ENCODE measurements at regions of chr9 and their contacts with region 1.

Region 1: DNA sequence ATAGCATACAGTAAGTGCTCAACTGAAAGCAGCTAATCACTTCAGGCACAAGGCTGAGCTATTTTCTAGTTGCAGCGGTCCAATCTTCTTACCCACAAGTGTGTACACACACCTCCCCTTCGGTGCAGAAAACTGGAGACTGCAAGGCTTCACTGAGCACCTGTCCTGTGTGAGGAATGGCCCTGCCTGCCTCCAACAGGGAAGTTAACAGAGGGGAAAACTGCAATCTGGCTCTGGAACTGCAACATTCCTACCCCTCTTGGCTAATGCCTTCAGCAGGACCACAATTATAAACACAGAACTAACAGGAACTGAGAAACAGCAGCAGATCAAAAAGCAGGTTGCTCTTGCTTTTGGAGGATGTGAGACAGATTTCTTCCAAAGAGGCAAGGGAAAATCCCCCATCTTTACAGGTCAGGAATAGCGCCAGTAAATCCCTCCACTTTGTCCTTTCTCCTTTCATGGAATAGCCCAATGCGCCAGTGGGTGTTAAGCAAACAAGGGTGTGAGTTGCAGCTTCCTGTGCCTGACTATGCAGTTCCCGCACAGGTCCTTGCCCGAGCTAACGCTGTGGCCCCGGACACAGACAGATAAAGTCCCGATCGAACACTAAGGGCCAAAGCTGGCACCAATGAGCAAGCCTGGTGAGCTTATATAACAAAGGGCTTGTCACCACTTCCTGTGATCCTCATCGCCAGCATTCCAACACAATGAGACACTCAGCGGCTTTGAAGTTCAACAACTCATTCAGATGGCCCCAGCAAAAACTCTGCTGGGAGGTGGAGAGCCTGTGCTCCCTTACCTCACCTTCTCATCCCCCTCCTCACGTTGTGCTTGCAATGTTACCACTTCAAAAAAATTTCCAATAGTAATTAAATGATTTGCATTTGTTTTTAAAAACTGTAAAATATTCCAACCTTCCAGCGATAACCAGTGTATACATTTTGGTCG is 21.5 kb downstream of the SHB start:
- DNase-seq: peak; percentile 79 to 90
- H3K4me3 ChIP-seq: peak overlapping the region; percentile 17
- H3K4me3 Mint-ChIP-seq: peak overlapping the region; percentile 79
- H3K27ac Mint-ChIP-seq: peak overlapping the region; percentile 100
- H3K4me1 ChIP-seq: peaks cover 62% of the 10 kb centered on the region
- H3K4me1 Mint-ChIP-seq: peaks cover 51% of the 10 kb centered on the region
- H3K27me3 ChIP-seq: no peaks in the 10 kb centered on the region
- H3K27me3 Mint-ChIP-seq: no peaks in the 10 kb centered on the region
- CTCF ChIP-seq: no peak

Region 2: DNA sequence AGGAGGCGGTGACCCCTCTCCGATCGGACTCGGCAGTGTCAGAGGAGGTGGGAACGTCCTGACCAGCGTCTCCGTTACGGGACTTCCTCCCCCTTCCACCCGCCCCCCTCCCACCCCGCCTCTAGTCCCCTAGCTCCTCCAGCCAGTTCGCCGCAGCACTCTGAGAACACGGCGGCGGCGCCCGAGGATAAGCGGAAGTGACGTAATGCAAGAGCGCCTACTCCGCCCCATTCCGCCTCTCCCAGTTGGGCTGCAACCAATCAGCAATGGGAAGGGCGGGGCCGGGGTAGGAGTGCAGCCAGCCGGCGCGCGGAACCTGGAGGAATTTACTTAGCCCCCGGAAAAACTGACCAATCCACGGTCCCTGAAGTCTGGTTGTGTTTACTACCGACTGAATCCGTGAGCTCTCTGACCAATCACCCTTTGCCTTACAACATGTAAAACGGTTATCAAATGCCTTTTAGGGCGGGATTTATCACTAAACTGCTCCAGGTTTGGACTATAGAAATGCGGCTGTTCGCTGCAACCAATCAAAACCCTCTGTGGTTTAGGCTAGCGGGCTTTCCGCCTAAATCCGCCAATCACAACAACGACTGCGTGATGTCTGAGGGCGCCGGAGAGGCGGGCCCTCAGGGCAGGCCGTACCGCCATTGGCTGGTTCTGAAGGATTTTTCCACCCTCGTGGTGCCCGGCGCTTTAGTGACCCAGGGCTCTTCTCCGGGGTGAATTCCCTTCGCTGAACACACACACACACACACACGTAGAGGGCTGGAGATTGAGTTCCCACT is 582.1 kb before region 1 on chr9 and contains the start of gene ZBTB5:
- CTCF ChIA-PET with region 1: no interaction called
- POLR2A ChIA-PET with region 1: no interaction called
- intact Hi-C with region 1: loop called (anchors 5 kb)
- DNase-seq: peak; percentile 99
- H3K4me3 ChIP-seq: peak within 1 kb of the TSS; percentile 89
- H3K4me3 Mint-ChIP-seq: peak within 1 kb of the TSS; percentile 95
- H3K27ac Mint-ChIP-seq: peak within 1 kb of the TSS; percentile 96
- H3K4me1 ChIP-seq: peaks cover 12% of the 10 kb centered on the region
- H3K4me1 Mint-ChIP-seq: peaks cover 21% of the 10 kb centered on the region
- H3K27me3 ChIP-seq: no peaks in the 10 kb centered on the region
- H3K27me3 Mint-ChIP-seq: no peaks in the 10 kb centered on the region
- CTCF ChIP-seq: no peak
- total RNA-seq, gene ZBTB5: 12.5 and 13.2 TPM in 2 replicates

Region 3: DNA sequence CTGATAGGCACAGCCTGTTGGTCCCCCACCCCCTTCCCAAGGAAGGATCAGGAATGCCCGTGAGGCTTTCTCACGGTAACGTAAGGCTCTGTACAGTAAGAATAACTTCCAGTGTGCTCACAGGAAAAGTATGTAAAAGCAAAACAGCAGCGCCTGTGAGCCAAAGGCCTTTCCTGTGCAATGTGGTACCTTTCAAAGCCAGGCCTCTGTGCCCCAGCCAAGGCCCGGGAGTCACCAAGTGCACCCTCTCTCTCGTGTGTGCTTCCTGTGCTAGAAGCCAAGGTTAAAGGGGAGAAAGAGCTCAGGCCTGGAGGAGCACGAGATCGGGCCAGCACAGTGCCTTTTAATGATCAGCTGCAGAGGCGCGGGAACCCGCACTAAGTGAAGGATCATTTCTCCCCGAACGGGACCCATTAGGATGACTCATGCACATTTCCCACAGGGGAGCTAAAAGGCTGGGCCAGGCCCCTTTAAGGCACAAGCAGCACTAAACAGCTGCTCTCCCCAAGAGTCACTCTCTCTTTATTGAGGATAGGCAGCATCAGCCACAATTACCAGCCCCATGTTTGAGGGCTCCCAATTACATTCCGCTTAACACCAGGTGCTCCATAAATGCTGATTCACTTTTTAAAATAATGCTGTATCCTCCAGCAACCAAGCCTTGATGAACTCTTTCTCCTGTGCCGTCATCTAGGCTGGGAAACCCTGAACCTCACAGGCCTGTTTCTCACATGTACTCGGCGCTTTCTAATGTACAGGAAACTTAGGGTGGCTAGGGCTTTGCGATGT is 21.4 kb before region 1 on chr9:
- CTCF ChIA-PET with region 1: interaction called, 5 read pairs
- POLR2A ChIA-PET with region 1: interaction called, 18 read pairs
- intact Hi-C with region 1: loop called (anchors 1 kb)
- DNase-seq: no peak
- H3K4me3 ChIP-seq: no peak overlapping the region
- H3K4me3 Mint-ChIP-seq: no peak overlapping the region
- H3K27ac Mint-ChIP-seq: peak overlapping the region; percentile 94
- H3K4me1 ChIP-seq: peaks cover 51% of the 10 kb centered on the region
- H3K4me1 Mint-ChIP-seq: peaks cover 35% of the 10 kb centered on the region
- H3K27me3 ChIP-seq: no peaks in the 10 kb centered on the region
- H3K27me3 Mint-ChIP-seq: no peaks in the 10 kb centered on the region
- CTCF ChIP-seq: no peak

Region 4: GRCh38 chr9:38068866-38069629 is 21.5 kb after region 1 on chr9 and contains the start of gene SHB:
- CTCF ChIA-PET with region 1: no interaction called
- POLR2A ChIA-PET with region 1: interaction called, 4 read pairs
- intact Hi-C with region 1: loop called (anchors 1 kb)
- DNase-seq: peak; percentile 81 to 84
- H3K4me3 ChIP-seq: peak within 1 kb of the TSS; percentile 92
- H3K4me3 Mint-ChIP-seq: peak within 1 kb of the TSS; percentile 95
- H3K27ac Mint-ChIP-seq: peak within 1 kb of the TSS; percentile 83
- H3K4me1 ChIP-seq: peaks cover 32% of the 10 kb centered on the region
- H3K4me1 Mint-ChIP-seq: peaks cover 24% of the 10 kb centered on the region
- H3K27me3 ChIP-seq: no peaks in the 10 kb centered on the region
- H3K27me3 Mint-ChIP-seq: no peaks in the 10 kb centered on the region
- CTCF ChIP-seq: no peak
- total RNA-seq, gene SHB: 18.3 and 18.4 TPM in 2 replicates

Measured in Caco-2 (cell line).